ENCODE measurements at regions of chr11 and their contacts with region 1.

Region 1: GRCh38 chr11:20355221-20356219 is 8.0 kb upstream of the HTATIP2 start:
- DNase-seq: no peak
- H3K4me3 Mint-ChIP-seq: no peak overlapping the region
- H3K27ac Mint-ChIP-seq: no peak overlapping the region
- H3K4me1 Mint-ChIP-seq: peaks cover 15% of the 10 kb centered on the region
- H3K27me3 Mint-ChIP-seq: peaks cover 16% of the 10 kb centered on the region

Region 2: DNA sequence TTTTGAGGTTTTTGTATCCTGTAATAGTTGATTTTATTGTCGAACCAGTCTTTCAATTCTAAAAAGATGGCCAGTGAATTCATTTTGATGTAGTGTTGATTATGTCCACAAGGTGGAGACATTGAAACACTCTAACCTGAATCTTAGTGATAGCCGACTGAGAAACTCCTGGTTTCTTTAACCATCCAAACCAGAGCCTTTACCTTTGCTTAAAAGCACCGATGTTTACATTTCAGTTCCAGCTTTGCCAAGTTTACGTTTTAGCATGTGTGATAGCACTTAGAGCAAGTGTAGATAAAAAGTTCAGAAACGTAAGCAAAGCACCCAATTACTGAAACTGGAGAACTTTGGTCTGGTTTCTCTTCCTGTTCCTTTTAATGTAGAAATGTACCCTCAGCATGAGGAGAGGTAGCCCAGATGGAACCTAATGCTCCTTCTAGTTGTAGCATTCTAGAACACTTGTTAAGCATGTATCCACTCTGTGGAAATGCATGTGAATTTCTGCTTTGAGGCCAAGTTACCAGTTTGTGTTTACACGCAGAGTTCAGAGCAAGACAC is 403.9 kb before region 1 on chr11:
- intact Hi-C with region 1: loop called (anchors 1 kb)
- DNase-seq: no peak
- H3K4me3 Mint-ChIP-seq: peak overlapping the region; percentile 53
- H3K27ac Mint-ChIP-seq: no peak overlapping the region
- H3K4me1 Mint-ChIP-seq: peaks cover 6% of the 10 kb centered on the region
- H3K27me3 Mint-ChIP-seq: peaks cover 14% of the 10 kb centered on the region

Region 3: GRCh38 chr11:20243974-20244373 is 111.5 kb before region 1 on chr11:
- intact Hi-C with region 1: loop called (anchors 10 kb)
- DNase-seq: no peak
- H3K4me3 Mint-ChIP-seq: no peak overlapping the region
- H3K27ac Mint-ChIP-seq: no peak overlapping the region
- H3K4me1 Mint-ChIP-seq: no peaks in the 10 kb centered on the region
- H3K27me3 Mint-ChIP-seq: peaks cover 9% of the 10 kb centered on the region

Measured in activated T-helper 1 cell treated with anti-CD3 and anti-CD28 coated beads, Interleukin-12 subunit alpha, Interleukin-12 subunit beta, Interleukin-2, Interleukin-4 antibody, amounts not matched to agents 30 ng/mL and 10 ng/mL and 1 ng/mL, durations not matched to agents 14 hours and 24 hours and 36 hours (primary cell).